SK-N-SH (cell line): ENCODE measurements at regions of chr11 and their contacts with region 1.

Region 1: DNA sequence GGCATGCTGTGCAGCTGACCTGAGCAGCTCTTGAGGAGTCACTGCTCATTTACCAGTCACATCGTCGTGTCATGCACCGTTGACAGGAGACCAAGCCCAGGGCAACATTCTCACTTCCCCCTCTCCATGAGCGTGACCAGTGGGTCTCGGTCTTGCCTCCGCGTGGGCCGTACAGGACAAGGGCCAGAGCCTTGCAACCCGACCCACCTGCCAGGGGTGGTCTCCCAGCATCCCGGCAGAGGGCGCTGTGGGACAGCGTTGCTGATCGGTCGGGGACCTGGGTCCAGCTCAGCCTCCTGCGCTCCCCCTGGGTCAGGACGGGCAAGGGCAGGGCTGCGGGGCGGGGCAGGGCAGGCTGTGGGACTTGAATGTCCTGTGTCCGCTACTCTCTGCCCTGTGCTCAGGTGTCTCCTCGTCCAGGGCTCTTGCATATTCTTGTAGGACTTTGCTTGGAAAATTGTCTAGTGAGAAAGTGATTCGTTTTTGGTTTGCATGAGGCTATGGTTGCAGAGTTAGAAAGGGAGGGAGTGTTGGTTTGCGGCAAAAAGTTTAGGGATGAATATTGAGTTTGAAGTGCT is 16.2 kb downstream of the EIF4G2 start:
- DNase-seq: peak; percentile 90
- H3K4me3 ChIP-seq: peak overlapping the region in 1 of 2 experiments; percentile 43; a peak in 1 of 4 replicates
- H3K27ac ChIP-seq: no peak overlapping the region
- H3K4me1 ChIP-seq: no peaks in the 10 kb centered on the region; a peak in 1 of 4 replicates
- H3K27me3 ChIP-seq: no peaks in the 10 kb centered on the region
- CTCF ChIP-seq: peak; percentile 85
- EP300 ChIP-seq: no peak
- RAD21 ChIP-seq: peak; percentile 87

Region 2: GRCh38 chr11:10770626-10771254 is 21.7 kb before region 1 on chr11:
- CTCF ChIA-PET with region 1: interaction called, 99 read pairs
- POLR2A ChIA-PET with region 1: interaction called, 5 read pairs
- DNase-seq: peak; percentile 49
- H3K4me3 ChIP-seq: no peak overlapping the region
- H3K27ac ChIP-seq: peak overlapping the region in 1 of 2 experiments; percentile 28; a peak in 2 of 4 replicates
- H3K4me1 ChIP-seq: peaks cover 0 to 8% of the 10 kb centered on the region in 2 experiments; a peak in 2 of 4 replicates
- H3K27me3 ChIP-seq: no peaks in the 10 kb centered on the region
- CTCF ChIP-seq: peak; percentile 87
- EP300 ChIP-seq: no peak
- RAD21 ChIP-seq: peak; percentile 74

Region 3: GRCh38 chr11:10803676-10804075 is 11.2 kb after region 1 on chr11:
- CTCF ChIA-PET with region 1: interaction called, 57 read pairs
- POLR2A ChIA-PET with region 1: interaction called, 30 read pairs
- DNase-seq: no peak
- H3K4me3 ChIP-seq: no peak overlapping the region
- H3K27ac ChIP-seq: no peak overlapping the region; a peak in 2 of 4 replicates
- H3K4me1 ChIP-seq: peaks cover 17 to 30% of the 10 kb centered on the region in 2 experiments
- H3K27me3 ChIP-seq: no peaks in the 10 kb centered on the region
- CTCF ChIP-seq: no peak
- EP300 ChIP-seq: no peak
- RAD21 ChIP-seq: no peak

Region 4: GRCh38 chr11:10847960-10848870 is 55.7 kb after region 1 on chr11:
- CTCF ChIA-PET with region 1: interaction called, 13 read pairs
- POLR2A ChIA-PET with region 1: no interaction called
- DNase-seq: no peak
- H3K4me3 ChIP-seq: no peak overlapping the region
- H3K27ac ChIP-seq: no peak overlapping the region
- H3K4me1 ChIP-seq: no peaks in the 10 kb centered on the region
- H3K27me3 ChIP-seq: no peaks in the 10 kb centered on the region
- CTCF ChIP-seq: no peak
- EP300 ChIP-seq: no peak
- RAD21 ChIP-seq: no peak

Region 5: DNA sequence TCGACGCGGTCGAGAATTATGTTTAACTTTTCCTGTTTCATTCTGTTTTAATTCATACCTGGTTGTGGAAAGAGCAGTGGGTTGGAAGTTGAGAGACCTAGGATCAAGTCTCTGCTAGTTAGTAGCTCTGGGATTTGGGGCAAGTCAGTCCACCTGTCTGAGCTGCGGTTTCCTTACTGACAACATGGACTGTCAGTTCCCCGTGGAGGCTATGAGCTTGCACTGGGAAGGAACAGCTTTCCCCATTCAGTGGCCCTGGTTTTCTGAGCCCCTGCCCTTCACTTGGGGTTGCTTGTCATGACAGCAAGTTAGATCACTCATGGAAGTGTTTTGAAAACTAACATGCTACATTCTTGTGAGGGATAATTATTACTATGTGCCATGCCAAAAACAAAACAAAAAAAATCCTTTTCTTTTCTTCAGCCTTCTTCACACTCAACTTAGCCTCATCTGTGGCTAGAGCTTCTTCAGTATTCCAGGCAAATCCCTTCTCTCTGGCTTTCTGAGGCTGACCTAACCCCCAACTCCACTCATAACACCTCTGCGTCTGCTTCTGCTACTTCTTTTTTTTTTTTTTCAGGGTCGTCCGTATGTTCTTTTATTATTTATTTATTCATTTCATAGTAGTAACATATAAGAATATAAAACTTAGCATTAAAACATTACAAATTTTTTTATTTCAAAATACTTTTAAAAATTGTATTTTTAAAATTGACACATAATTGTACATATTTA is 108.4 kb after region 1 on chr11:
- CTCF ChIA-PET with region 1: interaction called, 12 read pairs
- POLR2A ChIA-PET with region 1: no interaction called
- DNase-seq: no peak
- H3K4me3 ChIP-seq: no peak overlapping the region
- H3K27ac ChIP-seq: peak overlapping the region; percentile 86 to 99
- H3K4me1 ChIP-seq: peaks cover 21 to 29% of the 10 kb centered on the region in 2 experiments; a peak in 3 of 4 replicates
- H3K27me3 ChIP-seq: no peaks in the 10 kb centered on the region
- CTCF ChIP-seq: no peak
- EP300 ChIP-seq: no peak
- RAD21 ChIP-seq: no peak

Region 6: GRCh38 chr11:11022125-11022730 is 229.7 kb after region 1 on chr11:
- CTCF ChIA-PET with region 1: interaction called, 23 read pairs
- POLR2A ChIA-PET with region 1: no interaction called
- DNase-seq: peak; percentile 32
- H3K4me3 ChIP-seq: no peak overlapping the region
- H3K27ac ChIP-seq: no peak overlapping the region
- H3K4me1 ChIP-seq: peaks cover 0 to 6% of the 10 kb centered on the region in 2 experiments; a peak in 1 of 4 replicates
- H3K27me3 ChIP-seq: no peaks in the 10 kb centered on the region
- CTCF ChIP-seq: peak; percentile 66
- EP300 ChIP-seq: no peak
- RAD21 ChIP-seq: peak; percentile 67